ENCODE measurements at regions of chr6 and their contacts with region 1.

Region 1: DNA sequence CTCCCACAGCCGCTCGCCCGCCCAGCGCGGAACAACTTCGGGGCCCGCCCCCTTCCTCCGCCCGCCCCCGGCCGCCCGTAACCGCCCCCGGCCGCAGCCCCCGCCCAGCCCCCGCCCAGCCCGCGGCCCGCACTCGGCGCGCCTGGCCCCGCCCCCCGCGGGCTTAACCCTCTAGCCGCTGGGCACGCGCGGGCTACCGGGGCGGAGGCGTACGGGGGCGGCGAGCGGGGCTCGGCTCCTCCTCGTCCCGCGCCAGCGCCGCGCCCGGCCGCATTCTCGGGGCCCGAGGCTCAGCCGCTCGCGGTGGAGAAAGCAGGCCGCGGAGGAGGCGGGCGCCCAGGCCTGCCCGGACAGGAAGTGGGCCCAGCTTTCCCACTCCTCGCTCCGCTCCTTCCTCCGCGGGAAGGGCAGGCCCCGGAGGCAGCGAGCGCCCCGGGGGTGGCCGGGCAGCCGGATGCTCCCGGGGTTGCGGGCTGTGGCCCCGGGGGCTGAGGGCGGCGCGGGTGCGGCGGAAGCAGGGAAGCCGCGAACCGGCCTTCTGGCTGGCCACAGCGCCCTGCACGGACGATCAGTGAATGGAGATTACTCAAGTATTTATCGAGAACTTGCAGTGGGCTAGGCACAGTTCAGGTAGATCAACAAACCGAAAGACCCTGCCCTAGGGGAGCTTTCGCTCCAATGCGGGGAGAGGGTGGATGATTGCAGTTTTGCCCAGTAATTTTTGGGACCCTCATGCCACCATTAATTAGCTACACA is at the start of gene TRAM2:
- DNase-seq: peak; percentile 63 to 69
- ATAC-seq: peak; percentile 86 to 87
- H3K4me3 ChIP-seq: peak within 1 kb of the TSS; percentile 72 to 82 (median 79)
- H3K27ac ChIP-seq: peak within 1 kb of the TSS; percentile 88 to 95 (median 93)
- H3K4me1 ChIP-seq: peaks cover 29 to 32% of the 10 kb centered on the region in 2 donors
- H3K27me3 ChIP-seq: no peaks in the 10 kb centered on the region
- CTCF ChIP-seq: peak in 1 of 5 experiments; percentile 4
- POLR2A ChIP-seq: peak in 1 of 2 donors; percentile 31
- total RNA-seq, gene TRAM2: 2.4 to 4.5 (median 3.6) TPM

Region 2: DNA sequence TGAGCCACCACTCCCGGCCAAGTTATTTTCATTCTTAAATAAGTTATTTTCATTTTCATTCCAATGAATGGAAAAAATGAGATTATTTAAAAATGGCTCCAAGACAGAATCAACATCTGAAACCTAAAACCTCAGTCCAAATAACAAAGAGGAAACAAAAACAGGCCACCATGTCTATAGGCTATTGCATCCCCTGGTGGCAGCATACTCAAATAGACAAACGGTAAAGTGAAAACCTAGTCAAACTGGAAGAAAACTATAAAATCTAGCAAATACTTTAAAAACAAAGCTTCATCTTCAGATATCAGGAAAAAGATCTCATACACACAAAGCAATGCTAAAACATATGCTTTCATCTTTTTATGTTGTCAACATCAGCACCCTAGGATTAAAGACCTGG is 370.1 kb before region 1 on chr6:
- in situ Hi-C with region 1: no loop called
- intact Hi-C with region 1: no loop called
- DNase-seq: no peak
- ATAC-seq: no peak
- H3K4me3 ChIP-seq: no peak overlapping the region
- H3K27ac ChIP-seq: no peak overlapping the region
- H3K4me1 ChIP-seq: no peaks in the 10 kb centered on the region
- H3K27me3 ChIP-seq: no peaks in the 10 kb centered on the region
- CTCF ChIP-seq: no peak
- POLR2A ChIP-seq: no peak

Region 3: DNA sequence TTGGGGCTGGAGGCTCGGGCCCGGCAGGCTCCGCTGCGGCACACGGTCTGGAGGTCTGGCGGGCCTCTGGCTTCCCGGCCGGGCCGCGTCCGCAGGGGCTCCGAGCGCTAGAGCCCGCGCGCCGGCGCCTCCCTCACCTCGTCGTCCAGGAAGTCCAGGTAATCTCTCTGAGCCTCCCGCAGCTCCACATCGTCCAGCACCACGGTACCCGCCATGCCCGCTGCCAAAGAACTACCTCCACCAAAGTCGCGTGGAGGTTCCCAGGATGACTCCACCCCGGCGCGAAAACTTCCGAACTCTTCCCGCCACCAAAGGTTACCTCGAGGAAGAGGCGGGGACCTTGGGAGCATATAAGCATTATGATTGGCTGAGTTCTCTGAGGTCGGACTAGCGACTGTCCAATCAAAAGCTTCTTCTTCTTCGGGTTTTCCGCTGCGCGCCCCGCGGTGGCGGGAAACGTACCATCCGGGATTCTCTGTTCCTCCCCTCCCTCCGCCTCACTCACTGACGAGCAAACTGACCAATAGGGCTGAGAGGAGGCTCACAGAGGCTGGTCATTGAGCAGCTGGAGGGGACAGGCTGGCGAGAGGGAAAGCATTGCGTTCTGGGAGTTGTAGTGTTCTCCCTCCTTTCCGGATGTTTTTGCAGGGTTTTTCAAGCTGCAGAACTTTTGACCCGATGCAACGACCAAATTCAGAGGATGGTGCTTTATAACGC is 292.6 kb before region 1 on chr6 and contains the start of gene MCM3:
- in situ Hi-C with region 1: loop called in 1 of 4 experiments (anchors 25 kb)
- intact Hi-C with region 1: loop called (anchors 5 kb)
- DNase-seq: peak; percentile 96 to 98
- ATAC-seq: peak; percentile 100
- H3K4me3 ChIP-seq: peak within 1 kb of the TSS; percentile 75 to 91 (median 82)
- H3K27ac ChIP-seq: peak within 1 kb of the TSS; percentile 55 to 76 (median 70)
- H3K4me1 ChIP-seq: peaks cover 15 to 18% of the 10 kb centered on the region in 2 donors
- H3K27me3 ChIP-seq: no peaks in the 10 kb centered on the region
- CTCF ChIP-seq: peak in 1 of 5 experiments; percentile 23
- POLR2A ChIP-seq: no peak
- total RNA-seq, gene MCM3: 9.1 to 12.9 (median 9.8) TPM

Region 4: DNA sequence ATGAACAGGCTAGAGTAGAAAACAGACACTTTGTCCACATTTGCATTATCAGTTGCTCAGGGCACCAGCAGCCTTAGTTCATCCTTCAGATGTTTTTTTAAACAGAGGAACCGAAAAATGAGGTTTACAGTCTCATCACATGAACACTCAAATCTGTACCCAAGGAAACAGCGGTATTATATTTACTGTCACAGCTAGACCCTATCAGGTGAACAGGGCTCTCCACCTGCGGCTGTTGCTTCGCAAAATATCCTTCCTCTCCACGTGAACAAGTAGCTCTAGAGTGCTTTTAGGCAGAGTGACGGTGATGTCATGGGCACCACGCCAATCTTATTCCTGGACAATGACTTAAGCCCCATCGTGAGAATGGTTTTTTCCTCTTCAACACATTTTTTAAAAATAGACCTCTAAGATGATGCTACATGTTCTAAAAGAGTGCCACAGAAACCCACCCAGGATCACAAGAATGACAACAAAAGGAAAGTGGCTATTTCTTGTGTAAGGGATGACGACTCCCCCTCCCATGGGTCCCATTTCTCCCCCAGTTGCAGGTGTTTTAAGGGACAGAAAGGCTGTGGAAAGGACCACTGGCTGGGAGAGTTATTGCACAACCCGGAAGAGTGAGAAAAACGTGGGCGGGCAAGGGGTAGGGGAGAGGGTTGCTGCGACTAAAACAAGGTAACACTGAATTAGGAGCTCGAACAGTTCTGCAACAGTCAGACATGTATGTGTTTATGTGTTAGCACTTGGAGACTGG is 79.4 kb before region 1 on chr6:
- in situ Hi-C with region 1: loop called in 1 of 4 experiments (anchors 25 kb)
- intact Hi-C with region 1: no loop called
- DNase-seq: no peak
- ATAC-seq: no peak
- H3K4me3 ChIP-seq: no peak overlapping the region
- H3K27ac ChIP-seq: peak overlapping the region; percentile 12 to 82 (median 69)
- H3K4me1 ChIP-seq: peaks cover 26 to 35% of the 10 kb centered on the region in 2 donors
- H3K27me3 ChIP-seq: no peaks in the 10 kb centered on the region
- CTCF ChIP-seq: no peak
- POLR2A ChIP-seq: no peak

Region 5: DNA sequence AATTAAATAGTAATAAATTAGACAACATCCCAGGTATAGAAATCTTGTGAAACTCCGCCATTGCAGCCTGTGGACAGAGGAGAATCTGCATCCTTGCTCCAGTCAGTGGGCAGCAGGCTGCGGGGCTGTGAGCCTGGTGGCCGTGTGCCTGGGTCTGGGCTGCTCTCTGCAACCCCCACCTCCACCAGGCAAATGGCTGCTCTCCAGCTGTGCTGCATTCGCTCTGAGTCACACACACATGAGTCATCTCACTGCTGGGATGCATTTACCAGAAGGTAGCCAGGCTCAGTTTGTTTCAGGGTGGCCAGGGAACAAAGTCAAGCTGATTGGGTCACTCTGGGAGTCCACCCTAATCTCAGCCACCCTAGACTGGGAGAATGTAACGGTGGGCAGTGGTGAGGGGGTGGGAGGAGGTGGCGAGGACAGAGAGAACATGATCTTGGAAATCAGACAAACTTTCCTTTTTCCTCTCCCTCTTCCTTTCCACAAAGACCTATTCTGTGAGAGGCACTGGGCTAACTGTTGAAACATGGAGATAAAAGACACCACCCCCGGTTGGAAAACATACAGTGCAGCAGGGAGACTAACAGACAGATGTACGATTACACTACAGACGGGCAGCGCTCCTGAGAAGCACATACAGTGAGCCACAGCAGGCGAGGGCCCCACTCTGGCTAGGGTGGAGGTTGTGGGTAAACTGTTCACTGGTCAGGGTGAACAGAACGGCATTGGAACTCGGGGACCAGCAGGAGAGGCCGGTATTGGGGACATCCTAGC is 59.5 kb before region 1 on chr6:
- in situ Hi-C with region 1: loop called in 1 of 4 experiments (anchors 10 kb)
- intact Hi-C with region 1: no loop called
- DNase-seq: peak; percentile 89 to 91
- ATAC-seq: peak; percentile 99
- H3K4me3 ChIP-seq: no peak overlapping the region
- H3K27ac ChIP-seq: peak overlapping the region; percentile 72 to 82 (median 80)
- H3K4me1 ChIP-seq: peaks cover 27 to 36% of the 10 kb centered on the region in 2 donors
- H3K27me3 ChIP-seq: no peaks in the 10 kb centered on the region
- CTCF ChIP-seq: no peak
- POLR2A ChIP-seq: peak; percentile 16 to 54

Measured in gastrocnemius medialis (tissue), 4 donors.